Activated T-helper 1 cell treated with anti-CD3 and anti-CD28 coated beads, Interleukin-12 subunit alpha, Interleukin-12 subunit beta, Interleukin-2, Interleukin-4 antibody, amounts not matched to agents 30 ng/mL and 10 ng/mL and 1 ng/mL, durations not matched to agents 14 hours and 24 hours and 36 hours (primary cell): ENCODE measurements at regions of chr15 and their contacts with region 1.

Region 1: DNA sequence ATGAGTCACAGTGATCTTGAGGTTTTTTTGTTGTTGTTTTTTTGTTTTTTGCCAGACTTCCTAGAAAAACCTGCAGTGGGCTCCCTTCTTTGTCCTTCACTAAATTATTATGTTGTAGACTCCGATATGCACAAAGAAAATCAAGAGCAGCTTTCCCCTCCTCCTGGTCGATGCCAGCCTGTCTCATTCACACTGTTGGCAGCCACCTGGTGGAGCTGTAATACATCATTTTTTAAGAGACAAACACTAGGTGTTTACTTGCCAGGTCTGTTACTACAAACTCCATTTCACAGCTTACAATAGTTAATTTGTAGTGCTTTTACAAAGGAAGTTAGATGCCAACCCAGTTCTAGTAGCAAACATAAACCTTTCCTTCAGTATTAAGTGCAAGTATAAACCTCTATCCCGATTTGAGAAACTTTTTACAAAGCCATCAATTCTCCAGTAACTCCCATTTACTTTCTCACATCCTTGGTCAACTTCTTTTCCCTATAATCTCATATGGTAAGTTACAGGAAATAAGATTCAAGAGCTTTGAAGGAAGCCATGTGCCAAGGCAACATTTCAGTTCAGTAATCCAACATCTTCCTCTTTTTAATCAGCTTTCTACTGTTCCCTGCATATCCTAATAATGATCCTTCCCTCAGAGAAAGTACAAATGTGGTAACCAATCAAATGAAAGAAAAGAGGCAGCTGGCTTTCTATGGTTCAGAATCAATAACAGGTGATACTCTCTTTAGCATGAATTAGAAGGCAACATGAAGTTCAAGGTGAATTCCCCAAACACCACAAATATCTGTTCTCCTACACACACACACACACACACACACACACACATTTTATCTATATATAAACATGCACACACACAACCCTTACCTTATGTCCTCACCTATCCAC is 14.0 kb downstream of the AAGAB start:
- DNase-seq: no peak
- H3K4me3 Mint-ChIP-seq: peak overlapping the region; percentile 47
- H3K27ac Mint-ChIP-seq: peak overlapping the region; percentile 87
- H3K4me1 Mint-ChIP-seq: peaks cover 49% of the 10 kb centered on the region
- H3K27me3 Mint-ChIP-seq: no peaks in the 10 kb centered on the region

Region 2: DNA sequence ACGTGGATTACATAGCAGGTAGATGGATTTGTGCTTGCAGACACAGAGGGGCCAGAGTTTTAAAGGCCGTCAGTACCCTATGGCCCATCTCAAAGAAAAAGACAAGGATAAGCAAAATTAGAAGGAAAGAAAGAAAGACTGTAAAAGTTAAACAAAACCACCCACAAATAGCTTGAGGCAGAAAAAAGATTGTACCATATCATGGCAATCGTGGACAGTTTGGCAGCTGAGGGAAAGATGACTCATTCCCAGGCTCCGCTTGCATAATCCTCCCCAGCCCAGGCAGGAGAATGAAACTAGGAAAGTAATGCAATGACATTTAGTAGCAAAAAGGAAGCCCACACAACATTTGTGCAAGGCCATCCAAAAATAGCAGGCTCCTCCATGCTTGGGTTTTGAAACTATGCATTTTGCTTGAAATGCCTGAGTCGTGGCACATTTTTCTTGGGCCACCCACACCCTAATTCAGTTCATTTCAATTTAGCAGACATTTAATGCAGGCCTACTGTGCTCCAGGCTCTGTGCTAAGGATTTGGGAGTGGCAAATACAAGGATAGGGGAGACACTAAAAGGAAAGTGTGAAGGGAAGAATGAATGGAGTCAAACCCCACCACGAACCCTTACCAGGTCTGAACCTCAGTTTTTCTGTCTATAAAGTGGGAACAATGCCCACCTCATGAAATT is 216.0 kb before region 1 on chr15:
- intact Hi-C with region 1: loop called (anchors 5 kb)
- DNase-seq: no peak
- H3K4me3 Mint-ChIP-seq: peak overlapping the region; percentile 29
- H3K27ac Mint-ChIP-seq: peak overlapping the region; percentile 37
- H3K4me1 Mint-ChIP-seq: peaks cover 45% of the 10 kb centered on the region
- H3K27me3 Mint-ChIP-seq: peaks cover 9% of the 10 kb centered on the region

Region 3: DNA sequence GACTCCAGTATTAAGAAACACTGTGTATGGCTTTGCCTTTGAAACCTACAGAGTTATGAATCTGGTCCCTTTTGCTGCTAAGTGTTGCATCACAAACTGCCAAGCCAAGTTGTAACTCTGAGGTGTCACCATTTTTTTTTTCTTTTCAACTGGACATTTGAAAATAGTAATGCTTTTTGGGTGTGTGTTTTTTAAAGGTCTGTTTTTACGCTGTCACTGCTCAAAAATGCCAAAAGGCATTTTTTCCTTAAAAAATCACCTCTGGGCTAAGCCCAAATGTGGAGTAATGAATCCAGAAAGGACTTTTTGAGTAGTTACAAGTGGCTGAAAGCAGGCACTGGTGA is 165.6 kb before region 1 on chr15:
- intact Hi-C with region 1: no loop called
- DNase-seq: no peak
- H3K4me3 Mint-ChIP-seq: peak overlapping the region; percentile 58
- H3K27ac Mint-ChIP-seq: peak overlapping the region; percentile 95
- H3K4me1 Mint-ChIP-seq: peaks cover 83% of the 10 kb centered on the region
- H3K27me3 Mint-ChIP-seq: no peaks in the 10 kb centered on the region

Region 4: GRCh38 chr15:67101911-67102598 is 138.4 kb before region 1 on chr15:
- intact Hi-C with region 1: loop called (anchors 1 kb)
- DNase-seq: peak; percentile 64
- H3K4me3 Mint-ChIP-seq: no peak overlapping the region
- H3K27ac Mint-ChIP-seq: no peak overlapping the region
- H3K4me1 Mint-ChIP-seq: peaks cover 51% of the 10 kb centered on the region
- H3K27me3 Mint-ChIP-seq: no peaks in the 10 kb centered on the region

Region 5: GRCh38 chr15:67199881-67200763 is 40.4 kb before region 1 on chr15:
- intact Hi-C with region 1: loop called (anchors 2 kb)
- DNase-seq: no peak
- H3K4me3 Mint-ChIP-seq: no peak overlapping the region
- H3K27ac Mint-ChIP-seq: no peak overlapping the region
- H3K4me1 Mint-ChIP-seq: peaks cover 29% of the 10 kb centered on the region
- H3K27me3 Mint-ChIP-seq: no peaks in the 10 kb centered on the region

Region 6: DNA sequence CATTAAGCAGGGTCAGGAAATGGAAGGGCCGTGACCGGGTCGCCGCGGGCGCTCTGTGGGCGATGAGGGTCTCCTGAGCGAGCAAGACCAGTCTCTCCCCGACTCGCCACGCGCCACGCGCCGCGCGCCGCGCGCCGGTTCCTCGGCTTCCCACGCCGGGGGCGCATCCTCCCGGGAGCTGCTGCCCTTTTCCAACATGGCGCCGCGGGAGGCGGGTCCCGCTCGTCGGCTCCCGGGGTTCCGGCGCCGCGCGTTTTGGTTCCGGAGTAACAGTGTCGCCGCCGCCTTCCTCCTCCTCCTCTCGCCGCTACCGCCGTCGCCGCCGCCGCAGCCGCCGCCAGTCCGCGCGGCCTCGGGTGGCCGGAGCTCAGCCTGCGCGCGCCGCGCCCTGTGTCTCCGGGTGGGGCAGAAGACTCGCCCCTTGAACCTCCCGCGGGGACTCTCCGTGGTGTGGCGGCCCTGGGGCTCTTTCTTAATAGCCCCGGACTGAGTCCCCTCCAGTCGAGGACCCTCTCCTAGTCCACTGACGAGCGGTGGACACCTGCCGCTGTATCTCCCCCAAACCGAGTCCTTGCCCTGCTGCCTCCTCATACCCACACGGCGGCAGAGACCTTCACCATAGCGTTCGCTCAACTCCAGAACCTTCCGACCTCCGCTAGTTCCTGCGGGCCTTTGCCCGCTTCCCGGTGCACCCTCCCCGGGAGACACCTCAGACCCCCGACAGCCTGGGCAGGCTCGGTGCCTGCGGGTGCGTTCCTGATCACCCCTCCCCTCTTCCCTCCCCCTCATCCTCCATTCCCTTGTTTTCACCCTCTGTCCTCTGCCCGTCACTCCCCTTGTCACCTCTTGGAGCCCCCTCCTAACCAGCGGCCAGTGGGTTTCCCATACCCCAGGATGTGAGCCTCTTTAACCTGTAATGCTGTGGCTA is 302.2 kb after region 1 on chr15 and contains the start of gene MAP2K5:
- intact Hi-C with region 1: loop called (anchors 1 kb)
- DNase-seq: peak; percentile 82
- H3K4me3 Mint-ChIP-seq: peak within 1 kb of the TSS; percentile 98
- H3K27ac Mint-ChIP-seq: peak within 1 kb of the TSS; percentile 96
- H3K4me1 Mint-ChIP-seq: peaks cover 43% of the 10 kb centered on the region
- H3K27me3 Mint-ChIP-seq: no peaks in the 10 kb centered on the region
- total RNA-seq, gene MAP2K5: 22.1 and 27.5 TPM in 2 replicates